ENCODE measurements at regions of chr1 and their contacts with region 1.

Region 1: GRCh38 chr1:161486806-161487741 is 18.2 kb upstream of the FCGR2A start:
- DNase-seq: peak in 3 of 4 donors; percentile 29 to 56 (median 52)
- ATAC-seq: peak; percentile 91
- H3K4me3 ChIP-seq: no peak overlapping the region
- H3K27ac ChIP-seq: no peak overlapping the region
- H3K4me1 ChIP-seq: peaks cover 0 to 26% of the 10 kb centered on the region in 2 donors
- H3K27me3 ChIP-seq: peaks cover 0 to 31% of the 10 kb centered on the region in 2 donors
- CTCF ChIP-seq: peak; percentile 73 to 87

Region 2: GRCh38 chr1:161749509-161750407 is 262.7 kb after region 1 on chr1 and contains the start of gene DUSP12:
- intact Hi-C with region 1: loop called in 1 of 2 experiments (anchors 10 kb)
- DNase-seq: peak; percentile 87 to 98 (median 94)
- ATAC-seq: peak; percentile 100
- H3K4me3 ChIP-seq: peak within 1 kb of the TSS; percentile 64 to 95
- H3K27ac ChIP-seq: peak within 1 kb of the TSS; percentile 88 to 90
- H3K4me1 ChIP-seq: peaks cover 10 to 26% of the 10 kb centered on the region in 2 donors
- H3K27me3 ChIP-seq: no peaks in the 10 kb centered on the region
- CTCF ChIP-seq: no peak
- polyA plus RNA-seq, gene DUSP12: 40.3 to 53.0 (median 42.3) TPM

Region 3: GRCh38 chr1:161905269-161905884 is 418.3 kb after region 1 on chr1:
- intact Hi-C with region 1: no loop called
- DNase-seq: no peak
- ATAC-seq: peak; percentile 81
- H3K4me3 ChIP-seq: no peak overlapping the region
- H3K27ac ChIP-seq: no peak overlapping the region
- H3K4me1 ChIP-seq: peaks cover 0 to 4% of the 10 kb centered on the region in 2 donors
- H3K27me3 ChIP-seq: no peaks in the 10 kb centered on the region
- CTCF ChIP-seq: peak; percentile 20 to 39

Measured in left lung (tissue), 14 donors.